OCI-LY7 (cell line): ENCODE measurements at regions of chr6 and their contacts with region 1.

Region 1: GRCh38 chr6:53348371-53349208 is at the start of gene ELOVL5:
- DNase-seq: peak; percentile 96
- H3K4me3 ChIP-seq: peak within 1 kb of the TSS; percentile 88
- H3K27ac ChIP-seq: peak within 1 kb of the TSS; percentile 87
- H3K4me1 ChIP-seq: peaks cover 37% of the 10 kb centered on the region
- CTCF ChIP-seq: 0 out of 2 replicates have a peak, but pooled peaks have one; percentile 25
- total RNA-seq, gene ELOVL5: 65.4 and 66.8 TPM in 2 replicates

Region 2: DNA sequence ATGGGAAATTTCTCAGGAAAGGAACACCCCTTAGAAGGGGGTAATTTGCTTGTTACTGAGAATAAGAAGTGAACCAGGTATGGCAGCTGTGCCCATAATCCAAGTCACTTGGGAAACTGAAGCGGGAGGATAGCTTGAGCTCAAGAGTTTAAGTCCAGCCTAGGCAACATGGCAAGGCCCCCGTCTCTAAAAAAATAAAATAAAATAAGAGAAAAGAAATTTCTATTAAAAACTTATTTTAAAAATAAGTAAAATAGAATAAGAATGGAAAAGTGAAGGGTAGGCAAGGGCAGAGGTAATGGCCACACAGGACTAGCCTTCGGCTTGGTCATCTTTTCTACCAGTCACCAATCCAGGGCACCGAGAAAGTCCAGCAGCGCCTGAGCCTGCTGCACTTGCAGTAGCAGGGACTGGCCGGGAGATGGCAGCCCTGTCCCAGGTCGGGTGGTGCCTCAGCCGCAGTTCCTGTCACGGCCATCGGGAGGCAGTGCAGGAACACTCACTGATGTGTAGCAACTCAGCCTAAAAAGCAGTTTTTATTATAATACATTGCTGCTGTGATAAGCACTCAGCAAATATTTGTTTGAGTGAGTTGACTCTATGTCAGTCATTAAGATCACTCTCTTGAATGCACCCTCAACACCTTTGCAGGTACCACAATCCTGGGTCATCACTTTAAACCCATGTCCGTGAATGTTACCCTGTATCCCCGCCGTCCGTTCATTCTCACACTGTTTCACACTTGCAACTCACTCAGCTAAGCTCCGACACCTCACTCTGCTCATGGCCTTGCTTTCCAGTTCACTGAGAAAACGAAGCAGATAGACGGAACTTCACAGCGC is 176.8 kb before region 1 on chr6:
- CTCF ChIA-PET with region 1: no interaction called
- POLR2A ChIA-PET with region 1: interaction called, 3 read pairs
- intact Hi-C with region 1: loop called (anchors 1 kb)
- DNase-seq: peak; percentile 84
- H3K4me3 ChIP-seq: no peak overlapping the region
- H3K27ac ChIP-seq: no peak overlapping the region
- H3K4me1 ChIP-seq: peaks cover 6% of the 10 kb centered on the region
- CTCF ChIP-seq: peak; percentile 100

Region 3: DNA sequence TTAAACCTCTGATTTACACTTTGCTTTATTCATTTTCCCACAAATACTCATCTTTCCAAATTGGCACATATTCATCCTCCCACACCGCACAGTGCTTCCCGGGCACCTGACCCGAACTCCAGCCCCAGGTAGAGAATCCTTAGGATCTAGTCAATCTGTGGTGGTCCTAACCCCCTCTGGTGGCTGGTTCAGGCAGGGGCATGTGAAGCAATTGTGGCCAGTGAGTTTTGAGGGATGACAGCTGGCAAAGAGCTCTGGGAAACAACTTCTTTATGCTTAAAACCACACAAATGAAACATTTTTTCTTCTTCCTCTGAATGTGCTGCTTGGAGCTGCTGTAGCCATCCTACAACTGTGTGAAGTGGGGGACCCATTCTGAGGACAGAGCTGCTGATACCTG is 54.5 kb before region 1 on chr6:
- CTCF ChIA-PET with region 1: no interaction called
- POLR2A ChIA-PET with region 1: interaction called, 6 read pairs
- intact Hi-C with region 1: loop called (anchors 5 kb)
- DNase-seq: peak; percentile 54
- H3K4me3 ChIP-seq: no peak overlapping the region
- H3K27ac ChIP-seq: no peak overlapping the region
- H3K4me1 ChIP-seq: peaks cover 16% of the 10 kb centered on the region
- CTCF ChIP-seq: peak; percentile 95

Region 4: DNA sequence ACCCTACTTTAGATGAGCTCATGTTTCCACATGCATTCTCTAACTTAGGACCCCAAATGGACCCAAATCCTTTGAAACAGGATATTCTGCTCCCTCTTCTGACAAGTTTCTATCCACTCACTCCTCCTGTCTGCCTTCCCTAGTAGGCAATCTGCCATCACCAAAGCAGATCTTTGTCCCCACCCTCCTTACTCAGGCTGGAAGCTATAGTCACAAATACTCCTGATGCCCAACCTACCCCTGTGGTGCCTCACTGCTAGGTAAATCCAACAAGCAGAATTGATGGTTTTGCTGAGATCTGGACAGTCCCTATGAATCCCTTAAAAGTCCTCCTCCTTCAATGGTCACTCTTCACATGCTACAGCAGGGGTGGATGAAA is 21.6 kb before region 1 on chr6:
- CTCF ChIA-PET with region 1: no interaction called
- POLR2A ChIA-PET with region 1: interaction called, 15 read pairs
- intact Hi-C with region 1: no loop called
- DNase-seq: no peak
- H3K4me3 ChIP-seq: no peak overlapping the region
- H3K27ac ChIP-seq: no peak overlapping the region
- H3K4me1 ChIP-seq: peaks cover 50% of the 10 kb centered on the region
- CTCF ChIP-seq: no peak

Region 5: GRCh38 chr6:53359072-53359842 is 10.7 kb after region 1 on chr6:
- CTCF ChIA-PET with region 1: interaction called, 3 read pairs
- POLR2A ChIA-PET with region 1: interaction called, 10 read pairs
- intact Hi-C with region 1: no loop called
- DNase-seq: peak; percentile 91
- H3K4me3 ChIP-seq: peak overlapping the region; percentile 71
- H3K27ac ChIP-seq: peak overlapping the region; percentile 76
- H3K4me1 ChIP-seq: peaks cover 37% of the 10 kb centered on the region
- CTCF ChIP-seq: no peak